ENCODE measurements at regions of chr20 and their contacts with region 1.

Region 1: GRCh38 chr20:53594068-53595017 is 704 bp upstream of the ZNF217 start:
- DNase-seq: peak; percentile 89
- ATAC-seq: peak; percentile 88
- H3K4me3 ChIP-seq: peak overlapping the region; percentile 89 to 98 (median 90)
- H3K27ac ChIP-seq: peak overlapping the region; percentile 87
- H3K4me1 ChIP-seq: peaks cover 43% of the 10 kb centered on the region
- H3K27me3 ChIP-seq: no peaks in the 10 kb centered on the region; a peak in 1 of 5 replicates
- CTCF ChIP-seq: peak; percentile 88
- EP300 ChIP-seq: peak in 1 of 2 experiments; percentile 14; a peak in 1 of 4 replicates
- POLR2A ChIP-seq: peak; percentile 52 to 60
- RAD21 ChIP-seq: peak; percentile 91

Region 2: GRCh38 chr20:53643031-53643832 is 48.9 kb after region 1 on chr20:
- CTCF ChIA-PET with region 1: no interaction called
- POLR2A ChIA-PET with region 1: interaction called, 48 read pairs
- in situ Hi-C with region 1: no loop called
- intact Hi-C with region 1: loop called (anchors 1 kb)
- DNase-seq: no peak
- ATAC-seq: peak; percentile 77
- H3K4me3 ChIP-seq: peak overlapping the region; percentile 34 to 64 (median 48); a peak in 5 of 6 replicates
- H3K27ac ChIP-seq: peak overlapping the region; percentile 93
- H3K4me1 ChIP-seq: peaks cover 81% of the 10 kb centered on the region
- H3K27me3 ChIP-seq: no peaks in the 10 kb centered on the region
- CTCF ChIP-seq: no peak
- EP300 ChIP-seq: no peak; a peak in 1 of 4 replicates
- POLR2A ChIP-seq: peak in 1 of 2 experiments; percentile 77; a peak in 2 of 4 replicates
- RAD21 ChIP-seq: no peak

Region 3: DNA sequence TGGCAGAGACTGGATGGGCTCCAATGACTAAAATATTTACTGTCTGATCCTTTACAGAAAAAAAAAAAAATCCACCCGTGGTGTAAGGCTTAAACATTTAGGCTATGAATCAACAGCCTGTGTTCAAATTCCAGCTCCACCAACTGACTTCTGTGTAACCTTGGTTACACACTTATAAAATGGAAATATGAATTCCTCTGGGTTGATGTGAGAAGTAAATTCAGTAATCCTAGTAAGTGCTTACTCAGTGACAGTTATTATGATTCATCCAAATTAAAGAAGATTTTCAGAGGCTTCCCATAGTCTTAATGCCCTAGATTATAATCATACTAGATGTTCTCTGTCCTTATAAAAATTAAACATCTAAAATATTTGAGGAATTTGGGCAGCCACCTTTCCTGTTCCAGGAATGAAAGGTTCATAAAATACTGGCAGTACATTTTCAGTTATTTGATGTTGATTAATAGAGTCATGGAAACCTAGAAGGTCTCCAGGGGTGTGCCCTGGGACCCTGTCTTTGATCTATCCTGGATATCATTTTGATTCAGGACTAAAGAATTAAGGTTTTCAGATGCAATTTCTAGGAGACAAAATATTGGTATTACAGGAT is 179.6 kb after region 1 on chr20:
- CTCF ChIA-PET with region 1: no interaction called
- POLR2A ChIA-PET with region 1: interaction called, 10 read pairs
- in situ Hi-C with region 1: no loop called
- intact Hi-C with region 1: no loop called
- DNase-seq: peak; percentile 66
- ATAC-seq: peak; percentile 51
- H3K4me3 ChIP-seq: no peak overlapping the region
- H3K27ac ChIP-seq: peak overlapping the region; percentile 56
- H3K4me1 ChIP-seq: peaks cover 76% of the 10 kb centered on the region
- H3K27me3 ChIP-seq: no peaks in the 10 kb centered on the region
- CTCF ChIP-seq: no peak
- EP300 ChIP-seq: no peak
- POLR2A ChIP-seq: no peak
- RAD21 ChIP-seq: no peak